WTC11 (cell line): ENCODE measurements at regions of chr11 and their contacts with region 1.

Region 1: GRCh38 chr11:66480117-66480938 is at the start of gene DPP3:
- DNase-seq: peak; percentile 99
- ATAC-seq: peak; percentile 90
- H3K4me3 Mint-ChIP-seq: peak within 1 kb of the TSS; percentile 95
- H3K27ac Mint-ChIP-seq: peak within 1 kb of the TSS; percentile 95
- H3K4me1 Mint-ChIP-seq: peaks cover 26% of the 10 kb centered on the region
- H3K27me3 Mint-ChIP-seq: no peaks in the 10 kb centered on the region
- CTCF ChIP-seq: no peak
- total RNA-seq, gene DPP3: 77.0 to 86.7 TPM (median 83.4 TPM) in 3 replicates

Region 2: DNA sequence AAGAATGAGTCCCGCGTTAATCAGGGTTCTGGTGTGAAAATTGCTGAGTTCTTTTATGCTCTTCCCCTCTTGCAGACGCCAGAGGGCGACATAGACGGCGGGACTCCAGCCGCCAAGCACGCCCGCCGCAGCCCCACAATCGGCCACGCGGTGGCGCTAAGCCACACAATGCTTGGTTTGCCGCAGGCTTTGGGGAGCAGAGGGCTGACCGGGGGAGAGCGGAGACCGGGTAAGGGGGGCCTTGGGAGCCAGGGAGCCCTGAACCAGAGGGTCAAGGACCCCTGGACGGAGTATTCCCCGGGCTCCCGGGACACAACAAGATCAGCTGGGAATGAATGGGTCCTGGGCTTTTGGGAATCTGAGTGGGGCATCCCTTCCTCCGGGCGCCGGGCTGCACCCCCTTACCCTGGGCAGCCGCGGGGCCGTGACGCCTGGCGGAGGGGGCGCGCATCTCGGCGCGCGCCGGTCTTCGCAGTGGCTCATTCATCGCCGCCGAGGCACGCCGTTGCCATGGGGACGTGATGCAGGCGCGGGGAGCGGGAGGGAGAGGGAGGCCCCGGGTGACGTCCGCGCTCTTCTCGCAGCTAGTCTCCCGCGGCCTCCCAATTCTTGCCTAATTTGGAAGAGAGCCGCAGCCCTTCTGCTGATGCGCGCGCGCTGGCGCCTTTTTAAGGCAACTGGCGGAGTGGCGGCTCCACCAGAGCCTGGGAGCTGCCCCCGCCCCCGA is 71.7 kb before region 1 on chr11:
- CTCF ChIA-PET with region 1: interaction called, 17 read pairs
- POLR2A ChIA-PET with region 1: interaction called, 3 read pairs
- DNase-seq: peak; percentile 97
- ATAC-seq: peak; percentile 76
- H3K4me3 Mint-ChIP-seq: peak overlapping the region; percentile 66
- H3K27ac Mint-ChIP-seq: no peak overlapping the region
- H3K4me1 Mint-ChIP-seq: peaks cover 10% of the 10 kb centered on the region
- H3K27me3 Mint-ChIP-seq: peaks cover 34% of the 10 kb centered on the region
- CTCF ChIP-seq: peak; percentile 99

Region 3: DNA sequence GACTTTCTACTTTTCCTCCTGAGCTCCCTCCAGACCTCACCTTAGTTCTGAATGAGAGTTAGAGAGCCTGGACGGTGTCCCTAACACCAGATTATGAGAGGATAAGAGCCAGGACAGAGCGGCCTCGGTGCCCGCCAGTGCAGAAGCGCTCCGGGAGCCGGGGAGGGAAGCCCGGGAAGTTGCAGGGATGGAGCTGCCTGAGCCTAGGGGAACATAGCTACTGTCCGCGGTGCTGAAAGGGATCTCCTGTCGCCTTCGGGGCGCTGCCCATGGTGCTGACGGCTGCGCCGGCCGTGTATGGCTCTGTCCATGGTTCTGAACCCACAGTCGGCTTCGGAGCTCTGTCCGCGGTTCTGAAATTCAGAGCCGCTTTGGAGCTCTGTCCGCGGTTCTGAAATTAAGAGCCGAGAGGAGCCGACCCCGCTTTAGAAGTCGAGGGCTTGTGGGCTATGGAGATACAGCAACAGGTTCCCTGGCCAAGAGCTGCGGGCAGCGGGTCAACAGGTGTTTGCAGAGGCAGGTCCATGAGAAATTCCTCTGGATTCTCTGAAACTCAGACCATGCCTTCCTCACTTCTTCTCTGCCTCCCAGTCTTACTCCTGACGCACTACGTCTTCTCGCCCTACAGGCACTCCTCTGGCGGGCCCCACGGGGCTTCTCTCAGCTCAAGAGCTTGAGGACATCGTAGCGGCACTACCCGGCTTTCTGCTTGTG is 58.7 kb before region 1 on chr11:
- CTCF ChIA-PET with region 1: interaction called, 56 read pairs
- POLR2A ChIA-PET with region 1: interaction called, 9 read pairs
- DNase-seq: peak; percentile 95
- ATAC-seq: peak; percentile 55
- H3K4me3 Mint-ChIP-seq: peak overlapping the region; percentile 68
- H3K27ac Mint-ChIP-seq: no peak overlapping the region
- H3K4me1 Mint-ChIP-seq: peaks cover 27% of the 10 kb centered on the region
- H3K27me3 Mint-ChIP-seq: peaks cover 77% of the 10 kb centered on the region
- CTCF ChIP-seq: no peak

Region 4: DNA sequence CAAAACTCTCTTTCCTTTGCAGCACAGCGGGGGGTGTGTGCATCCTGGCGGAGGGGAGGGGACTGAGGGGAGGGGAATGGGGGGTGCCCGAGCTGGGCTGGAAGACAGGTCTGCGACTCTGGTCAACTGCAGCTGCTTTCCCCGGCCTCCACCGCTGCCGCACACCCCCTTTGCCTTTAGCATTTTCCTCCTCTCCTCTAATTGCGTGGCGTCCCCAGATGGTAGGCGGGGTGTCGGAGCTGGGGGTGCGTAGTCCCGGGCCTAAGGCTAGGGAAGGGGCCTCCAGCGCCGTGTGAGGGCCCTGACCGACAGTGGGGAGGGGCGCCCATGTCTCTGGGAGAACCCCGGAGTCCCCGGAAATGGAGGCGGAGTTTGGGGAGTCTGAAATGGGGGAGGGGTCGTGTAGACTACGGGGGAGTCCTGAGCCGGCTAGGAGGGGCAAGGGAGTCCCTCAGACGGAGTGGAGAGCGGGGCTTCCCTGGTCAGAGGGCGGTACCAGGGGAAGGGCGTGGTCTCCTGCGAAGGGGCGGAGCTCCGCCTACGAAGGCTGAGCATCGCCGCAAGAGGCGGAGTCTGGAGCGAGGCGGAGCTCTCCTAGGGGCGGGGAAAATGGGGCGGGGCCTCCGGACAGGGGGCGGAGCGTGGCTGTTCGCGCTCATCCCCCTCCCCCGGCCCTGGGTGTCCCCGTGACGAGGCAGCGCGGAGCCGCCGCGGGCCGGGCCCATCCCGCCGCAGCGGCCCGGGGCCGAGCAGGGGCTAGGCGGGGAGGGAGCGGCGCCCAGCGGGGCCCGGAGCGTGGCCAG is 13.9 kb before region 1 on chr11 and contains the start of gene PELI3:
- CTCF ChIA-PET with region 1: interaction called, 43 read pairs
- POLR2A ChIA-PET with region 1: interaction called, 22 read pairs
- DNase-seq: peak; percentile 98
- ATAC-seq: peak; percentile 94
- H3K4me3 Mint-ChIP-seq: peak within 1 kb of the TSS; percentile 88
- H3K27ac Mint-ChIP-seq: peak within 1 kb of the TSS; percentile 90
- H3K4me1 Mint-ChIP-seq: peaks cover 43% of the 10 kb centered on the region
- H3K27me3 Mint-ChIP-seq: no peaks in the 10 kb centered on the region; the same call in 1 of the 2 replicates
- CTCF ChIP-seq: no peak
- total RNA-seq, gene PELI3: 6.7 to 7.8 TPM (median 6.8 TPM) in 3 replicates

Region 5: GRCh38 chr11:66568124-66568916 is 88.0 kb after region 1 on chr11 and contains the start of gene CTSF:
- CTCF ChIA-PET with region 1: no interaction called
- POLR2A ChIA-PET with region 1: no interaction called
- DNase-seq: peak; percentile 53
- ATAC-seq: no peak
- H3K4me3 Mint-ChIP-seq: peak within 1 kb of the TSS; percentile 16; the same call in 1 of the 2 replicates
- H3K27ac Mint-ChIP-seq: peak within 1 kb of the TSS; percentile 48; the same call in 1 of the 2 replicates
- H3K4me1 Mint-ChIP-seq: peaks cover 21% of the 10 kb centered on the region
- H3K27me3 Mint-ChIP-seq: peaks cover 15% of the 10 kb centered on the region
- CTCF ChIP-seq: no peak
- total RNA-seq, gene CTSF: 4.4 to 4.9 TPM (median 4.7 TPM) in 3 replicates

Region 6: GRCh38 chr11:66592457-66593302 is 112.4 kb after region 1 on chr11 and contains the starts of genes CCDC87 and CCS:
- CTCF ChIA-PET with region 1: interaction called, 10 read pairs
- POLR2A ChIA-PET with region 1: no interaction called
- DNase-seq: peak; percentile 97
- ATAC-seq: peak; percentile 94
- H3K4me3 Mint-ChIP-seq: peak within 1 kb of the TSS; percentile 97
- H3K27ac Mint-ChIP-seq: peak within 1 kb of the TSS; percentile 99
- H3K4me1 Mint-ChIP-seq: peaks cover 11% of the 10 kb centered on the region
- H3K27me3 Mint-ChIP-seq: peaks cover 39% of the 10 kb centered on the region
- CTCF ChIP-seq: peak; percentile 32
- total RNA-seq, gene CCDC87: 0.71 to 0.85 TPM (median 0.80 TPM) in 3 replicates
- total RNA-seq, gene CCS: 35.9 to 47.3 TPM (median 41.7 TPM) in 3 replicates

Region 7: DNA sequence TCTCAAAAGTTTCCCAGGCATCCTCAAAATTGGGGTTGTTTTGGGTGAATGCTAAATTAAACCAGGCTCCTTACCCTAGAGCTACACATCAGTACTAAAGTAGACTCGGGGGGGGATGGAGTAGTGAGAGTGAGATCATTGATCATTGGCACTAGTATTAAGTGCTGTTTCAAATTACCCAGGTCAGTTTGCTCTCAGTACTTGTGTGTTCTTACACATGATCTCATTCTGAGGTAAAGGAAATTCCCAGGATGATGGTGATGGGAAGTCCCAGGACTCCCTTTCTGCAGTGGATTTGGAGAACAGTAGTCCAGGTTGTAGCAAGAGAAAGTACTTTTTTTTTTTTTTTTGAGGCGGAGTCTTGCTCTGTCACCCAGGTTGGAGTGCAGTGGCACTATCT is 170.7 kb after region 1 on chr11:
- CTCF ChIA-PET with region 1: no interaction called
- POLR2A ChIA-PET with region 1: no interaction called
- DNase-seq: no peak
- ATAC-seq: no peak
- H3K4me3 Mint-ChIP-seq: no peak overlapping the region
- H3K27ac Mint-ChIP-seq: peak overlapping the region; percentile 65; the same call in 1 of the 2 replicates
- H3K4me1 Mint-ChIP-seq: no peaks in the 10 kb centered on the region; the same call in 1 of the 2 replicates
- H3K27me3 Mint-ChIP-seq: no peaks in the 10 kb centered on the region
- CTCF ChIP-seq: no peak